ENCODE measurements at regions of chr1 and their contacts with region 1.

Region 1: DNA sequence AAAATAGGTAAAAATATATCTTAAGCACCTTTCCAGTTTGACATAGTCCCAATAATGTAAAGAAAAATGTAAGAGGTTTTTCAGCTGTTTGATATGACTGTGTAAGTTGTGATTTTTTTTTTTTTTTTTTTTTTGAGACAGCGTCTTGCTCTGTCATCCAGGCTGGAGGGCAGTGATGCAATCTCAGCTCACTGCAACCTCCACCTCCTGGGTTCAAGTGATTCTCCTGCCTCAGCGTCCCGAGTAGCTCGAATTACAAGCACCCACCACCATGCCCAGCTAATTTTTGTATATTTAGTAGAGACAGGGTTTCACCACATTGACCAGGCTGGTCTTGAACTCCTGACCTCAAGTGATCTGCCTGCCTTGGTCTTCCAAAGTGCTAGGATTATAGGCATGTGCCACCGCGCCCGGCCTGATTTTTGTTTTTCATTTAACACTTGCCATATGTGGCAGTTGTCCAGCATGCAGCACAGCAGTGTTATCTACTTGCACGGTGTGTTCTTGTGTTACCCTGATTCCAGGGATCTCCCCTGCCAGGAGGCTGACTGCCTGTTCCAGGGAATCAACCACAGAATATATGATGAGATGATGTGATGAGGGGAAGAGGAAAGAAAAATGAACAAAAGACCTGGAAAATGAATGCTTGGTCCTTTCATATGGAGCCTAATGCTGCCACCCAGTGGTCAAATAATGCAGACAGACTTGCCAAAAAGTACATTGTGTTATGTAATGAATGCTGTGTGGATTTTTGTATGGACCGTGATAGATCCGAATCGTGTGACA is 79.0 kb downstream of the RAVER2 start:
- DNase-seq: peak; percentile 31
- H3K4me3 Mint-ChIP-seq: no peak overlapping the region
- H3K27ac Mint-ChIP-seq: no peak overlapping the region
- H3K4me1 Mint-ChIP-seq: peaks cover 20% of the 10 kb centered on the region
- H3K27me3 Mint-ChIP-seq: peaks cover 9% of the 10 kb centered on the region

Region 2: DNA sequence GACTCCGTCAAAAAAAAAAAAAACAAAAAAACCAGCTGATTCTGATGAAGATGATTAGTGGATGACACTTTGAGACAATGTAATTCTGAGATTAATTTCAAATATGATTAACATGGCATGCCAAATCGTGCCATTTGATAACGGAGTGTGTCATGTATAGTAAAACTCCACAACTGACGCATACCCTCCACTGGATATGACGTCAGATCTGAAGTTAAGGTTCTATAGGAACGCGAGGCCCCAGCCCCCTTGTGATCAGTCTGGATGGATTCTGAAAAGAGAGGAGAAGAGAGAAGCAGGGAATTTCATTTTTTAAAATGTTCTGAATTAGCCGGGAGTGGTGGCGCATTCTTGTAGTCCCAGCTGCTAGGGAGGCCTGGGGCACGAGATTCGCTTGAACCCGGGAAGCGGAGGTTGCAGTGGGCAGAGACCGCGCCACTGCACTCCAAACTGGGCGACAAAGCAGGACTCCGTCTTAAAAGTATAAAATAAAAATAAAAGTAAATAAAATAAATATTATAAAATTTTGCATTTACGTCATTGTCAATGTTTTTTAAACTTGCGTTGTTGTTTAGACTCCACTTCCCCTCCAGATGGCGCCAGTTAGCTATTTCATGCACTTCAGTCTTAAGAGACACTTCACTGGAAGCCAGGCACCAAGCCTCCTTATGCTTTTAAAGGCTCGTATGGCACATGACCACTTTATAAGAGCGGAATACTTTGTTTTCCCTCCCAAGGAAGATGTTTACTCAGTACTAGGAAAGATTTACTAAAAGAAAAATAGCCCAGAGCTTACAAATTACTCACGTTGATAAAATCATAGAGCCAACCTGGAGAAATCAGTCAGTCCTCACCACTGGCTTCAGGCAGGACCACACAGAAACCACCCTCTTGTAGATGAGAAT is 555.0 kb before region 1 on chr1:
- intact Hi-C with region 1: loop called (anchors 1 kb)
- DNase-seq: peak; percentile 25
- H3K4me3 Mint-ChIP-seq: no peak overlapping the region
- H3K27ac Mint-ChIP-seq: no peak overlapping the region
- H3K4me1 Mint-ChIP-seq: no peaks in the 10 kb centered on the region
- H3K27me3 Mint-ChIP-seq: peaks cover 7% of the 10 kb centered on the region

Region 3: DNA sequence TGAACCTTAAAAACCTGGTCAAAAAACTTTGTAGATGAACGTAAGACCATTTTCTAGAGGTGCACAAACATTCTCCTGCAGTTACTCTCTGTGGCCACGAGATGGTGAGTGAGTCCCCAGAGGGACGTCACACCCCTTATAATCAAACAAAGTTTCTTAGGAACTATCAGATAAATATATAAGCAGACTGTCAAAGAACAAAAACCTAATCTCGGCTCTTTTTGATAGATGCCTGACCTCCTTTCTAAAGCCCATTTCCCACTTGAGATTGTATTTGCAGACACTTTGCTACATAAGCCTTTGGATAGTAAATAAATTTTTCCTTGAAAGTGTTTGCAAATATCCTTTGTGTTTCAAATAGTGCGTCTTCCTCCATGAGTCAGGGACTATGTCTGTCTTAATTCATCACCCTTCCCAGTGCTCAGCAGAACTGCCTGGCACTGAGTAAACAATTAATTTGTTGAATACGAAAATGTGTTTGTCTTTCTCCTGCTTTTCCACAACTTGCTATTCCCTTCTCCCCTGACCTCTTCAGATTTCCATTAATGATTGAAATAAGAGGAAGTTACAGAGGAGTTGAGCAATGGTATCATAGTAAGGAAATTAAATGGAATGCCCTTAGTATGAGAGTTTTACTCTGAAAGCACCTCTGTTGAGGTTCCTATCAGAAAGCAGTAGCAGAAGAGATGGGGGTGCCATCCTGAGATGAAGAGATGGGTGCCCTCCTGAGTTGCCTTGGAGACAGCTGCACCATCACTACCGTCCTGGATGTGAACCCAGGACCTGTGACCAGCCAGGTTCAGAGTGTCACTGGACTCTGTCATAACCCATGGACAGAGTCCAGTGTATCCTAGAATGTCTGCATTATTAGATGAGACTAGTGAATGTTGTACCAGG is 136.8 kb before region 1 on chr1:
- intact Hi-C with region 1: loop called (anchors 1 kb)
- DNase-seq: no peak
- H3K4me3 Mint-ChIP-seq: no peak overlapping the region
- H3K27ac Mint-ChIP-seq: no peak overlapping the region
- H3K4me1 Mint-ChIP-seq: peaks cover 7% of the 10 kb centered on the region
- H3K27me3 Mint-ChIP-seq: no peaks in the 10 kb centered on the region

Region 4: DNA sequence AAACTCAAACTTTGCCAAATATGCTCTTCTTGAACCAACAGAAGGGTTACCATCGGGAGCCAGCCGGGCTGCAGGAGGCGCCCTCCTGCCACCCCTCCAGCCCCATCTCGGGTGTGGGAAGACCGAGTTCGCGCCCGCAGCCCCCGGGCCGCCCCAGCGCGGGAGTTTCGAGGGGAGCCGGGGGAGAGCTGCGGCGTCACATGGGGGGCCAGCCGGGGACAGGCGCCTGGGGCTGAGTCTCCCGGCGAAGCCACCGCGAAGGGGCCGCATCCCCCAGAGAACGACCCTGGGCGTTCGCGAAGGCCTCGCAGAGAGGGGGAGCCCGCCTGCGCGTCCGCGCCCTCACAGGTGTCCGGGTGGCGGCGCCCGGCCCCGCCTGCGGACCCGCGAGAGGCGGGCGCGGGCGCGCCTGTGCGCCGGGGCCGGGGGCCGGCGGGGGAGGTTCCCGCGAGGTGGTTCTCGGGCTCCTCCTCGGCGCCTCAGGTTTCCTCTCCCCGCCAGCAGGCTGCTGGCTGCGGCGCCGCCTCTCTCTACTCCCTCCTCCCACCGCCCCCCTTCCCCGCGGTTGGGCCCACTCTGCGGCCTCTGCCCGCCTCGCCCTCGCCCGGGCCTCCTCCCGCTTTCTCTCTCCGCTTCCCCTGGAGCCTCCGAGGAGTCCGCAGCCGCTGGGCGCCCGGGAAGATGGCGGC is 79.2 kb before region 1 on chr1 and contains the start of gene RAVER2:
- intact Hi-C with region 1: loop called (anchors 2 kb)
- DNase-seq: peak; percentile 20
- H3K4me3 Mint-ChIP-seq: peak within 1 kb of the TSS; percentile 78
- H3K27ac Mint-ChIP-seq: no peak within 1 kb of the TSS
- H3K4me1 Mint-ChIP-seq: peaks cover 7% of the 10 kb centered on the region
- H3K27me3 Mint-ChIP-seq: peaks cover 38% of the 10 kb centered on the region
- total RNA-seq, gene RAVER2: 0.55 and 0.83 TPM in 2 replicates

Measured in activated T-helper 2 cell treated with anti-CD3 and anti-CD28 coated beads, Interferon-gamma antibody, Interleukin-2, Interleukin-4, amounts not matched to agents 10 μg/mL and 5 μg/mL and 100 μg/mL, durations not matched to agents 14 hours and 24 hours and 36 hours (primary cell).